ENCODE measurements at regions of chr2 and their contacts with region 1.

Region 1: GRCh38 chr2:39379643-39380524 is 57.2 kb downstream of the MAP4K3 start:
- DNase-seq: peak; percentile 60
- ATAC-seq: peak; percentile 90
- H3K4me3 ChIP-seq: no peak overlapping the region
- H3K27ac ChIP-seq: no peak overlapping the region
- H3K4me1 ChIP-seq: peaks cover 19% of the 10 kb centered on the region; the same call in 1 of the 2 replicates
- H3K27me3 ChIP-seq: no peaks in the 10 kb centered on the region
- CTCF ChIP-seq: peak; percentile 64; the same call in 1 of the 2 replicates

Region 2: GRCh38 chr2:37635504-37636380 is 1744.1 kb before region 1 on chr2:
- CTCF ChIA-PET with region 1: no interaction called
- POLR2A ChIA-PET with region 1: no interaction called
- in situ Hi-C with region 1: no loop called
- intact Hi-C with region 1: no loop called
- DNase-seq: no peak
- ATAC-seq: no peak
- H3K4me3 ChIP-seq: no peak overlapping the region
- H3K27ac ChIP-seq: no peak overlapping the region
- H3K4me1 ChIP-seq: no peaks in the 10 kb centered on the region
- H3K27me3 ChIP-seq: no peaks in the 10 kb centered on the region; the same call in 1 of the 2 replicates
- CTCF ChIP-seq: no peak

Region 3: DNA sequence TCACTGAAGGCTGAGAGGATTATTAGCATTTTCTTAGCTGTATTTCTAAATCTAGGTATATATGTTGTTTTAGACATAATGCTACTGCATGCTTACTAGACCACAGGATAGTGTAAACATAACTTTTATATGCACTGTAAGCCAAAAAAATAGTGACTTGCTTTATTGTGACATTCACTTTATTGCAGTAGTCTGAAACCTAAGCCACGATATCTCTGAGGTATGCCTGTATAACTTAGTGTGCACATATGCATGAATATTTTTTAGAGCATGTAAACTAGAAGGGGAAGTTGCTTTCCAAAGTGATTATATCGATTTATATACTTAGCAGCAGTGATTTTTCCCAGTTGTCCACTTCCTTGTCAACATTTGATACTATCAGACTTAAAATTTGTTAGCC is 340.8 kb before region 1 on chr2:
- CTCF ChIA-PET with region 1: no interaction called
- POLR2A ChIA-PET with region 1: no interaction called
- in situ Hi-C with region 1: no loop called
- intact Hi-C with region 1: no loop called
- DNase-seq: no peak
- ATAC-seq: no peak
- H3K4me3 ChIP-seq: no peak overlapping the region
- H3K27ac ChIP-seq: no peak overlapping the region
- H3K4me1 ChIP-seq: no peaks in the 10 kb centered on the region
- H3K27me3 ChIP-seq: no peaks in the 10 kb centered on the region
- CTCF ChIP-seq: no peak

Region 4: GRCh38 chr2:39334529-39334928 is 45.4 kb before region 1 on chr2:
- CTCF ChIA-PET with region 1: no interaction called
- POLR2A ChIA-PET with region 1: interaction called, 11 read pairs
- in situ Hi-C with region 1: no loop called
- intact Hi-C with region 1: no loop called
- DNase-seq: no peak
- ATAC-seq: no peak
- H3K4me3 ChIP-seq: no peak overlapping the region
- H3K27ac ChIP-seq: no peak overlapping the region
- H3K4me1 ChIP-seq: no peaks in the 10 kb centered on the region
- H3K27me3 ChIP-seq: no peaks in the 10 kb centered on the region
- CTCF ChIP-seq: no peak

Region 5: GRCh38 chr2:39436592-39437510 is 57.0 kb after region 1 on chr2 and contains the start of gene MAP4K3:
- CTCF ChIA-PET with region 1: no interaction called
- POLR2A ChIA-PET with region 1: no interaction called
- in situ Hi-C with region 1: no loop called
- intact Hi-C with region 1: loop called (anchors 5 kb)
- DNase-seq: peak; percentile 75
- ATAC-seq: peak; percentile 95
- H3K4me3 ChIP-seq: peak within 1 kb of the TSS; percentile 76 to 85
- H3K27ac ChIP-seq: peak within 1 kb of the TSS; percentile 89
- H3K4me1 ChIP-seq: peaks cover 40% of the 10 kb centered on the region
- H3K27me3 ChIP-seq: no peaks in the 10 kb centered on the region
- CTCF ChIP-seq: no peak
- total RNA-seq, gene MAP4K3: 26.6 TPM

Region 6: DNA sequence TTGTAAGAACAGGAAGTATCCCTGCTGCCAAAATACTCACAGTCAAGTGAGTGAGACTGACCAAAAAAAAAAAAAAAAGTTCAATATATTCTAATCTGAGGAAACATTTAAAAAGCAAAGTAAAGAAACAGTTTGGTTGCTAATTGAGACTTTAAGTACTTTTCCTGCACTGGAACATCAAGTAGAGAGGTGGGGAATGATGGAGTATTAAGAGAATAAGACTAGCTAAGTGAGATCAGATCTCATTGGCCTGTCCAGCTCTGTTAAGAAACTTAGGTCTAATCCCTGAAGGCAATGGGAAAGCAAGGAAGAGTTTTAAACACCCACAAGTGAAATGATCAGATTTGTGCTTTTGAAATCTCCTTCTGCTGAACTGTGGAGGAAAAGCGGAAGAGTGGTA is 85.0 kb after region 1 on chr2:
- CTCF ChIA-PET with region 1: no interaction called
- POLR2A ChIA-PET with region 1: interaction called, 11 read pairs
- in situ Hi-C with region 1: no loop called
- intact Hi-C with region 1: no loop called
- DNase-seq: no peak
- ATAC-seq: no peak
- H3K4me3 ChIP-seq: no peak overlapping the region
- H3K27ac ChIP-seq: no peak overlapping the region
- H3K4me1 ChIP-seq: peaks cover 5% of the 10 kb centered on the region; the same call in 1 of the 2 replicates
- H3K27me3 ChIP-seq: no peaks in the 10 kb centered on the region
- CTCF ChIP-seq: no peak

Region 7: DNA sequence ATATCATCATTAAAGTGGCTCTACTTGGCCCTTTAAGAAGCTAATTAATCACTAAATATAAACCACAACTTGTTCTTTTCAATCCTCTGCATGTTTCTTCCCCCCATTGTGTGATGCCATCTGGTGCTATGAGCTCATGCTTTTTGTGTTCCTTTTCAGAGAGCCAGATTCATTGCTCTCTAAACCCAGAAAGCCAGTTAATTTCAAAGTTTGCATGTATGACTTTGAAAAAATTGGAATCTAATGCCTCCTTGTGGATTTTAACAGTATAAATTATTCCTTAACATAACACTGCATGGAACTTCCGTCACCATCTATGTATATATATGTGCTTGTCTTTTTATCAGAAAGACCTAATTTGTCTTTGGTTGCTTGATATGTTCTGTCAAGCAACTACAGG is 317.0 kb after region 1 on chr2:
- CTCF ChIA-PET with region 1: no interaction called
- POLR2A ChIA-PET with region 1: no interaction called
- in situ Hi-C with region 1: no loop called
- intact Hi-C with region 1: loop called (anchors 10 kb)
- DNase-seq: peak; percentile 13
- ATAC-seq: no peak
- H3K4me3 ChIP-seq: no peak overlapping the region
- H3K27ac ChIP-seq: no peak overlapping the region
- H3K4me1 ChIP-seq: no peaks in the 10 kb centered on the region
- H3K27me3 ChIP-seq: no peaks in the 10 kb centered on the region
- CTCF ChIP-seq: peak; percentile 30; the same call in 1 of the 2 replicates